ENCODE measurements at regions of chr20 and their contacts with region 1.

Region 1: DNA sequence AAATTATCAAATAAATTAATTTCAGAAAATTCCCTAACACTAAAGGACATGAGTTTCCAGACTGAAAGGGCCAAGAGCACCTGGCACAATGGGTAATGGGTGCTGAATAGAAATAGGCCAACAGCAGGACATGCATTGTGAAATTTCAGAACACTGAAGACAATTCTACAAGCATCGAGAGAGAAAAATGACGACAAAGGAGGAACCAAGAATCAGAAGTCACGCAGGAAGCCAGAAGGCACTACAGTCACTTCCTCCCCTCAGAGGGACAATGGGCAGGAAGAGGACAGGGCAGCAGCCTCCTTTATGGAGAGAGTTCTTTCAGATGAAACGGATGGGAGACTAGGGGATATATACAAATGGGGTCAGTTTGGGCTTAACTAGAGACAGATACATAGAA is 29.6 kb downstream of the PCNA start:
- DNase-seq: peak in 1 of 2 donors; percentile 23
- ATAC-seq: peak; percentile 64 to 85 (median 74)
- H3K4me3 ChIP-seq: no peak overlapping the region
- H3K27ac ChIP-seq: peak overlapping the region in 6 of 10 donors; percentile 28 to 95 (median 52)
- H3K4me1 ChIP-seq: peaks cover 0 to 30% (median 5%) of the 10 kb centered on the region in 9 donors
- H3K27me3 ChIP-seq: no peaks in the 10 kb centered on the region
- CTCF ChIP-seq: no peak

Region 2: GRCh38 chr20:4956200-4956810 is 133.9 kb before region 1 on chr20:
- intact Hi-C with region 1: loop called in 2 of 10 experiments (anchors 10 kb)
- DNase-seq: no peak
- ATAC-seq: peak in 2 of 8 donors; percentile 48 to 56
- H3K4me3 ChIP-seq: no peak overlapping the region
- H3K27ac ChIP-seq: no peak overlapping the region
- H3K4me1 ChIP-seq: peaks cover 0 to 22% (median 5%) of the 10 kb centered on the region in 9 donors
- H3K27me3 ChIP-seq: no peaks in the 10 kb centered on the region
- CTCF ChIP-seq: peak; percentile 78 to 92 (median 83)

Region 3: DNA sequence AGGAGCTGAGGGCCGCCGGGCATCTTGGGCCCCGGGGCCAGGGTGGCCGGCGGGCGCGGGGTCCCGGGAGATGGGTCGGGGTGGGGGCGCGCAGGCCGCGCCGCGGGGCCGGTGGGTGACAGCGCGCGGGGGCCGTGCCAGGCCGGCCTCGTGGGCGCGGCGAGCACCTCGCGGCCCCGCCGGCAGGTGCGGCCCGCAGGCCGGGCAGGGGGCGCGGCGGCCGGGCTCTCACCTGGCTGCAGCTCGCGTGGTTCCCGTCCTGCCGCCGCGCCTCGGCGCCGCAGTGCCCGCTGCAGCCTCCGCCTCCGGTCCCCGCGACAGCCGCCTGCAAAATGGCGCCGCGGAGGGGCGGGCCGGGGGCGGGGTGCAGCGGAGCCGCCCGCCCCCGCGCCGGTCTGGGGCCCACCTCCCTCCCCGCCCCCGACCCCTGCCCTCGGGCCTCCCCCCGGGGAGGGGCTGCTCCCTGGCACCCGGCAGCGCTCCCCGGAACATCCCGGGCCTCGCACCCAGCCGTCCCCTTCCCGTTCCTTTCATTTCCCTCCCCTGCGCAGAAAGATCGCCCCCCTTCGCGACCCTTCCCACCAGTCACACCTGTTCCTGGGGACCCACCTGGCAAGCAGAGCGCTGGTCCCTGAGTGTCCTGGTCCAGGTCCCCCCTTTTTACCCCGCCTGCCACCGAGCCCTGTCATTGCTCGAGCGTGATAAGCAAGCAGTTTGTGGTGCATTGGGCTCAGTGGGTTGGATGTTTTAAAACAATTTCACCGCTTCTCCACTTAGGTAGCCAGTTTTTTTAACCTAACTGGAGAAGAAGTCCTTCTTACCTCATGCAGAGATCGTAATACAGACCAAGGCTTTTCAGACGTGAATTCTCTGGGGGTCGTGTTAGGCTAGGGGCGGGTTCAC is 88.8 kb before region 1 on chr20 and contains the start of gene SLC23A2:
- intact Hi-C with region 1: loop called in 2 of 10 experiments (anchors 10 kb)
- DNase-seq: peak; percentile 35 to 48
- ATAC-seq: peak; percentile 54 to 89 (median 82)
- H3K4me3 ChIP-seq: peak within 1 kb of the TSS; percentile 65 to 96 (median 88)
- H3K27ac ChIP-seq: peak within 1 kb of the TSS in 5 of 10 donors; percentile 10 to 71 (median 41)
- H3K4me1 ChIP-seq: peaks cover 5 to 33% (median 12%) of the 10 kb centered on the region in 9 donors
- H3K27me3 ChIP-seq: no peaks in the 10 kb centered on the region
- CTCF ChIP-seq: no peak
- total RNA-seq, gene SLC23A2: 6.3 to 12.3 (median 7.5) TPM

Region 4: GRCh38 chr20:5119435-5120188 is 29.4 kb after region 1 on chr20 and contains the start of gene PCNA:
- intact Hi-C with region 1: loop called in 1 of 10 experiments (anchors 1 kb)
- DNase-seq: peak; percentile 96 to 97
- ATAC-seq: peak; percentile 99 to 100 (median 100)
- H3K4me3 ChIP-seq: peak within 1 kb of the TSS; percentile 48 to 92 (median 74)
- H3K27ac ChIP-seq: peak within 1 kb of the TSS; percentile 69 to 90 (median 80)
- H3K4me1 ChIP-seq: peaks cover 5 to 41% (median 21%) of the 10 kb centered on the region in 9 donors
- H3K27me3 ChIP-seq: no peaks in the 10 kb centered on the region
- CTCF ChIP-seq: peak in 5 of 9 donors; percentile 12 to 47 (median 27)
- total RNA-seq, gene PCNA: 17.9 to 37.3 (median 21.4) TPM